Activated CD4-positive, alpha-beta memory T cell treated with anti-CD3 and anti-CD28 coated beads for 36 hours (primary cell): ENCODE measurements at regions of chr7 and their contacts with region 1.

Region 1: DNA sequence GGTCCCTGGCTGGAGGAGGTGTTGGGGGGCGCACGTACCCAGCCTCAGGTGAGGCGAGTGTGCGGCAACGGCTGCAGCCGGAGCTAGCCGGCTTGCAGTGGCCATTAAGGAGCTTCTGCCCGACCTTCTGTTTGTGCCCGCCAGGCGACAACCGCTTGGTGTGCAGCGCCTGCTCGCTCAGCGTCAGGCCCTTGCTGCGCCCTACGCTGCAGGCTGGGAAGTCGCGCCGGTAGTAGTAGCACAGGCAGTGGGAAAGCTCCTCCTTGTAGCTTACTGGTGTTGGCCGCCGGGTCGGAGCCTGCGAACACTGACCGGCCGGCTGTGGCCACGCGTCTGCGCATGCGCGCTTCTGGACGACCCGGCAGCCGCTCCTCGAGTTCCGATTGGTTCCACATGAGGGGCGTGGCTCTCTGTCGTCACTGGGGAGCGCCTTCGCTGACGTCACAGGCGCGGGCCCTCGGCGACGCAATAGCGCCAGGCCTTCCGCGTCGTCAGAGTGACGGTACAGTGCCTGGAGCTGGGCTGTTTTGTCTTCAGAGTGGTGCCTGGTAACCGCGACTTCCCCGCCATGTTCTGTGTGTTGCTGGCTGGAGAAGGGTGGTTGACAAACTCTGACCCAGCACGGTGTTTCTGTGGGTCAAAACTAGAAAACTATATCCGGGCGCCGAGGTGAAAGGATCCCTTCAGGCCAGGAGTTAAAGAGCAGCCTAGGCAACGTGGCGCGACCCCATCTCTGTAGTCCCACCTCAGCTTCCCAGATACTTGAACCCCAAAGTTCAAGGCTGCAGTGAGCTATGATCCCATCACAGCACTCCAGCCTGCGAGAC is 76.3 kb upstream of the TMEM248 start:
- DNase-seq: peak; percentile 99
- H3K4me3 Mint-ChIP-seq: peak overlapping the region; percentile 89
- H3K27ac Mint-ChIP-seq: peak overlapping the region; percentile 98
- H3K4me1 Mint-ChIP-seq: peaks cover 31% of the 10 kb centered on the region
- H3K27me3 Mint-ChIP-seq: peaks cover 2% of the 10 kb centered on the region

Region 2: DNA sequence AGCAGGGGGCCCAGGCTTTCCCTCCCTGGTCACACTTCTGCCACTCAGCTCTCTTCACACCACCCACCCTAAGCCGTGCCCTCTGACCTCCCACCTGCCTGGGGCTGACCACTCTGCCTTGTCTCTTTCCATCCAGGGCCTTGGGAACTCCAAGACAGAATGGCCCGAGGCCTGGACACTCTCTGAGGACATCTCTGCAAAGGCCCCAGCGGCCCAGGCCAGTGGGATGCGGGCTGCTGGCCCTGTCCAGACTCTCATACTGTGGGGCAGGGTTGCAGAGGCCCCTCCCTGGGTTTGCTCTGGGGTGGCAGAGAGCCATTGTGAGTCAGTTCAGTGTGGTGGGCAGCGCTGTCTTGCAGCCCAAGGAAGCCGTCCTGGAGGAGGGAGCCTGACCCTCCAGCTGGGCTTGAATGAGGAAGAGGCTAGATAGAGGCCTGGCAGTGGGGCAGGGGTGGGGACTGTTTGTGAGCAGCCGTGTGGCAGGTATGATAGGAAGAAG is 144.1 kb before region 1 on chr7:
- CTCF ChIA-PET with region 1: no interaction called
- POLR2A ChIA-PET with region 1: no interaction called
- intact Hi-C with region 1: no loop called
- DNase-seq: no peak
- H3K4me3 Mint-ChIP-seq: no peak overlapping the region
- H3K27ac Mint-ChIP-seq: no peak overlapping the region
- H3K4me1 Mint-ChIP-seq: no peaks in the 10 kb centered on the region
- H3K27me3 Mint-ChIP-seq: no peaks in the 10 kb centered on the region

Region 3: GRCh38 chr7:66740302-66740979 is 104.3 kb before region 1 on chr7 and contains the start of gene RABGEF1:
- CTCF ChIA-PET with region 1: no interaction called
- POLR2A ChIA-PET with region 1: no interaction called
- intact Hi-C with region 1: loop called (anchors 2 kb)
- DNase-seq: peak; percentile 98
- H3K4me3 Mint-ChIP-seq: peak within 1 kb of the TSS; percentile 97
- H3K27ac Mint-ChIP-seq: peak within 1 kb of the TSS; percentile 93
- H3K4me1 Mint-ChIP-seq: peaks cover 32% of the 10 kb centered on the region
- H3K27me3 Mint-ChIP-seq: no peaks in the 10 kb centered on the region
- total RNA-seq, gene RABGEF1: 18.8 to 20.7 TPM

Region 4: DNA sequence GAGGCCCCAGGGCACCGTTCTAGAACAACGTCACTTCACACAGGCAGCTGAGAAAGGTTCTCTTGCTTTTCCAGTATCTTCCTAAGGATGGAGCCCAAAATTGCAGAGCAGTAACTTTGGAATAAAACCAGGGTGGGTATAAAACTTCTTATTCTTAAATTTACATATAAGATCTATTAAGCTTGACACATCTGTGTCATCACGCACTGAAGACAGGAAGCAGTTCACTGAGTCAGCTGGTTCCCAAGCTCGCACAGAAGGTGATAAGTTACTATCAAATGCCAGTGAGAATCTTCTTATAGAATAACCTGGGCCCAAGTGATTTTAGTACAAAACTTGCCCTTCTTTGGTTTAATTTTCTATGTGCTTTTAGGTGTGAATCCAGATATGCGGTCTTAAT is 34.0 kb before region 1 on chr7:
- CTCF ChIA-PET with region 1: no interaction called
- POLR2A ChIA-PET with region 1: no interaction called
- intact Hi-C with region 1: no loop called
- DNase-seq: no peak
- H3K4me3 Mint-ChIP-seq: no peak overlapping the region
- H3K27ac Mint-ChIP-seq: no peak overlapping the region
- H3K4me1 Mint-ChIP-seq: no peaks in the 10 kb centered on the region
- H3K27me3 Mint-ChIP-seq: no peaks in the 10 kb centered on the region

Region 5: GRCh38 chr7:66886152-66886551 is 41.4 kb after region 1 on chr7:
- CTCF ChIA-PET with region 1: interaction called, 4 read pairs
- POLR2A ChIA-PET with region 1: interaction called, 5 read pairs
- intact Hi-C with region 1: loop called (anchors 2 kb)
- DNase-seq: peak; percentile 35
- H3K4me3 Mint-ChIP-seq: no peak overlapping the region
- H3K27ac Mint-ChIP-seq: no peak overlapping the region
- H3K4me1 Mint-ChIP-seq: peaks cover 31% of the 10 kb centered on the region
- H3K27me3 Mint-ChIP-seq: no peaks in the 10 kb centered on the region

Region 6: GRCh38 chr7:66920769-66921395 is 76.1 kb after region 1 on chr7 and contains the start of gene TMEM248:
- CTCF ChIA-PET with region 1: interaction called, 5 read pairs
- POLR2A ChIA-PET with region 1: interaction called, 26 read pairs
- intact Hi-C with region 1: loop called (anchors 2 kb)
- DNase-seq: peak; percentile 94
- H3K4me3 Mint-ChIP-seq: peak within 1 kb of the TSS; percentile 97
- H3K27ac Mint-ChIP-seq: peak within 1 kb of the TSS; percentile 91
- H3K4me1 Mint-ChIP-seq: peaks cover 41% of the 10 kb centered on the region
- H3K27me3 Mint-ChIP-seq: peaks cover 1% of the 10 kb centered on the region
- total RNA-seq, gene TMEM248: 67.2 to 70.3 TPM